ENCODE measurements at regions of chr2 and their contacts with region 1.

Region 1: DNA sequence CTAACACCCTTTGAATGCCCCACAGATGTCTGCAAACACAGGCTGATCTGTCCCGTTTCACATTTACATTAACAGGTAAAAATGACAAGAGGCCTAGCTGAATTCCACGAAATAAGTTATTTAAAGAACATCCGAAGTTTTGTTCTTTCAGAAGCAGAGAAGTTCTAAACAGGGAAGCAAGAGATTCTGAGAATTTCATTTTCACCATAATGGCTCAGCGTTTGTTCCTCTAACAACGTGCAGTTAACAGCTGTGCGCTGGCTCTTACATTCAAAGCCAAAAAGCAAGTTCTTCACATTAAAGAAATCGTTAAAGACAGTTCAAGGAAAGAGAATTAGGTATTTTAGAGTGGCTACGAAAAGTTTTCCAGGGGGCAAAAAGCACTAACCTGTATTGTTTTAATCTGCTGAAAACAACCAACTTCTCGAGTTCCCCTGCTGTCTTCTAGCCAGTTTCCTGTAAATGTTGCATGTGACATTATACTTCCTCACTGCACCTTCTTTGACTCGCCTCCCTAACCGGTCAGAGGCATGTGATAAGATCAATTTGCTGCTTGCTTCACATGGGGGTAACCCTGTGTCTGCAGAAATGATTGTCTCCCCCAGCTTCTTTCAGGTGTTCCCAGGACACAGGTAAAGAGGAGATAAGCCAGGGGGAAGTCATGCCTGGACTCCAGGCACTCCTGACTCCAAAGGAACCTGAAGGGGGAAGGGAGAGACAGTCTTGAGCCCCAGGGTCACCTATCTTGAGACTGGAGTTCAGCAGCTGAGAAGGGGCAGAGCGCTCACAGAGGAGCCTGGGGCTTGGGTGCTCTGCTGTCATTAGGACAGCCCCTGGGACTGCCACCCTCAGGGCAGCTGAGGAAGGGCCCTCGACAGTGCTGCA is 36.8 kb upstream of the WIPF1 start:
- DNase-seq: peak; percentile 86
- H3K4me3 Mint-ChIP-seq: peak overlapping the region; percentile 90
- H3K27ac Mint-ChIP-seq: peak overlapping the region; percentile 95
- H3K4me1 Mint-ChIP-seq: peaks cover 71% of the 10 kb centered on the region
- H3K27me3 Mint-ChIP-seq: no peaks in the 10 kb centered on the region

Region 2: DNA sequence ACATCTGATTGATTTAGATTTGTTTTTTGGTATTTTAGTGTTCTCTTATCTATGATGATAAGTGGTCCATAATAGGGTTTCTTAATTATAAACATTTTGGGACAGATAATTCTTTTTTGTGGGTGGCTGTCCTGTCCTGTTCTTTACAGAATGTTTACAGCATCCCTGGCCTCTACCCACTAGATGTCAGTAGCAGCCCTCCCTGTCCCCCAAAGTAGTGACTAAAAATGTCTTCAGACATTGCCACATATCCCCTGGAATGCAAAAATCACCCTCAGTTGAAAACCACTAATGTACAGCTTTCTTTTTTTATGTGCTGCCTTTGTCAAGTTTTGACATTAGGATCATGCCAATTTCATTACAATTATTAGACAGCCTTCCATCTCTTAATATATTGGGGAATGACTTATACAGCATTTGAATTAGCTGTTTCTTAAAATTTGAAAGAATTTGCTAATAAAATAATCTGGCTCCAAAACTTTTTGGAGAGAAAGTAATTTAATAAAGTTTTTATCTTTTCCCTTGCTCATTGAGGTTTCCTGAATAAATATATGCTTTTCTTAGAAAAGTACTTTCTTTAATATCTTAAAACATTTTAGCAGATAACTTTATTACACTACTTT is 56.3 kb before region 1 on chr2:
- intact Hi-C with region 1: loop called (anchors 2 kb)
- DNase-seq: peak; percentile 84
- H3K4me3 Mint-ChIP-seq: no peak overlapping the region
- H3K27ac Mint-ChIP-seq: no peak overlapping the region
- H3K4me1 Mint-ChIP-seq: peaks cover 51% of the 10 kb centered on the region
- H3K27me3 Mint-ChIP-seq: no peaks in the 10 kb centered on the region

Region 3: DNA sequence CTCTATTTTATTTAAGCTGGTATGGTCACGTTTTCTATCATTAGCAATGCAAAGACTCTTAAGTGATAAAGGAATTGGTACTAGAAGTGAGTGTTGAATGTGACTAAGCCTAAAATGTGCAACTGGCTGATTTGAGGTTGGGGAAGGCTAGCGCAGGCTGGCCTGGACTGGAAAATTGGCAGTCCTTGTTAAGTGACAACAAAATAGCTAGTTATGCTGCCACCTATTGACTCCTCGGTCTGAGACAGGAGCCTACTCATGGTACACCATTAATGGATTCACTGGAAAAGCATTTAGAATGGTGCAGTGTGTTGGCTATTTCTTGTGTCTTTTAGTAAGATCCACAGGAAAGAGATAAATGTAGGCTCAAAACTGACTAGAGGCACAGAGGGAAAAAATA is 31.1 kb before region 1 on chr2:
- intact Hi-C with region 1: loop called (anchors 1 kb)
- DNase-seq: peak; percentile 84
- H3K4me3 Mint-ChIP-seq: no peak overlapping the region
- H3K27ac Mint-ChIP-seq: peak overlapping the region; percentile 81
- H3K4me1 Mint-ChIP-seq: peaks cover 78% of the 10 kb centered on the region
- H3K27me3 Mint-ChIP-seq: no peaks in the 10 kb centered on the region

Region 4: GRCh38 chr2:174623690-174624089 is 10.7 kb before region 1 on chr2:
- intact Hi-C with region 1: loop called (anchors 1 kb)
- DNase-seq: peak; percentile 51
- H3K4me3 Mint-ChIP-seq: peak overlapping the region; percentile 36
- H3K27ac Mint-ChIP-seq: peak overlapping the region; percentile 63
- H3K4me1 Mint-ChIP-seq: peaks cover 60% of the 10 kb centered on the region
- H3K27me3 Mint-ChIP-seq: no peaks in the 10 kb centered on the region

Region 5: DNA sequence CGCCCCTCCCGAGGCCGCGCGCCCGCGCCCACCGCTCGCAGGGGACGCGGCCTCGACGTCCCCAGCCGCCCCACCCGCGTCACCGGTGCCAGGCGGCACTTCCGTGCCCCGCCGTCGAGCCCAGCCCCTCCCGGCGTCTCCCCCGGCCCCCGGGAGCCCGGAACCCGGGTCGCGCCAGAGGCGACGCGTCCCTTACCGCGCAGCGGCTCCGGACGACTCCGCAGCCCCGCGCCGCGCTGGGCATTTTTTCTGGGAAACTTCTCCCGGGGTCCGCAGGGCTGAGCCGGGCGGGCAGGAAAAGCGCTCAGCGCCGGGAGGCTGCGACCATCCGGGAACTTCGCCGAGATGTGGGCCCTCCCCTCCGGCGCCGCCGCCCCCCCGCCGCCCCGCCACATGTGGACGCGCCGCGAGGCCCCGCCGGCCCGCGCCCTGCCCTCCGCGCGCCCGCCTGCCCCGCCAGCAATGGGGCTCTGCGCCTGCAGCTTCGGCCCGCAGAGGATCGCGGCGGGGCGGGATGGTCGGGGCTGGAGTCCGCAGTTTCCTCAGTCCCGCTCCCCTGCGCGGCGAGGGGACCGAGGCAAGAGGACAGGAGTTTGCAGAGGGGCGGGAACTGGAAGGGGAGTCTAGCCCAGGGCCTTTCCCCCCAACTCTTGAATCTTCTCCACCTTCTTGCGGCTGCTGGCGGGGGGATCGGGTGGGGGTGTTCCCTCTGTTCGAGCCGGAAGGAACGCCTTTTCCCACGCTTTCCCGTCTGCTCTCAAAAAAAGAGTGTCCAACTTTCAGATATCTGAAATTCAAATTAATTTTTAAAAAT is 48.4 kb after region 1 on chr2:
- intact Hi-C with region 1: loop called (anchors 1 kb)
- DNase-seq: peak; percentile 89
- H3K4me3 Mint-ChIP-seq: peak overlapping the region; percentile 92
- H3K27ac Mint-ChIP-seq: peak overlapping the region; percentile 97
- H3K4me1 Mint-ChIP-seq: peaks cover 50% of the 10 kb centered on the region
- H3K27me3 Mint-ChIP-seq: no peaks in the 10 kb centered on the region

Region 6: GRCh38 chr2:175167792-175168563 is 533.6 kb after region 1 on chr2 and contains the start of gene ATF2:
- intact Hi-C with region 1: loop called (anchors 5 kb)
- DNase-seq: peak; percentile 99
- H3K4me3 Mint-ChIP-seq: peak within 1 kb of the TSS; percentile 100
- H3K27ac Mint-ChIP-seq: peak within 1 kb of the TSS; percentile 100
- H3K4me1 Mint-ChIP-seq: peaks cover 33% of the 10 kb centered on the region
- H3K27me3 Mint-ChIP-seq: no peaks in the 10 kb centered on the region
- total RNA-seq, gene ATF2: 58.8 and 60.2 TPM in 2 replicates

Measured in activated CD4-positive, alpha-beta T cell treated with anti-CD3 and anti-CD28 coated beads, Interleukin-2, amount 10 ng/mL, durations not matched to agents 24 days and 14 days (primary cell).